RWPE1 (cell line): ENCODE measurements at regions of chr4 and their contacts with region 1.

Region 1: GRCh38 chr4:127604949-127605709 is 27.6 kb upstream of the INTU start:
- DNase-seq: peak; percentile 28
- H3K27ac ChIP-seq: no peak overlapping the region
- CTCF ChIP-seq: peak; percentile 60

Region 2: GRCh38 chr4:127370604-127371003 is 234.5 kb before region 1 on chr4:
- CTCF ChIA-PET with region 1: no interaction called
- POLR2A ChIA-PET with region 1: no interaction called
- DNase-seq: no peak
- H3K27ac ChIP-seq: no peak overlapping the region
- CTCF ChIP-seq: no peak

Region 3: DNA sequence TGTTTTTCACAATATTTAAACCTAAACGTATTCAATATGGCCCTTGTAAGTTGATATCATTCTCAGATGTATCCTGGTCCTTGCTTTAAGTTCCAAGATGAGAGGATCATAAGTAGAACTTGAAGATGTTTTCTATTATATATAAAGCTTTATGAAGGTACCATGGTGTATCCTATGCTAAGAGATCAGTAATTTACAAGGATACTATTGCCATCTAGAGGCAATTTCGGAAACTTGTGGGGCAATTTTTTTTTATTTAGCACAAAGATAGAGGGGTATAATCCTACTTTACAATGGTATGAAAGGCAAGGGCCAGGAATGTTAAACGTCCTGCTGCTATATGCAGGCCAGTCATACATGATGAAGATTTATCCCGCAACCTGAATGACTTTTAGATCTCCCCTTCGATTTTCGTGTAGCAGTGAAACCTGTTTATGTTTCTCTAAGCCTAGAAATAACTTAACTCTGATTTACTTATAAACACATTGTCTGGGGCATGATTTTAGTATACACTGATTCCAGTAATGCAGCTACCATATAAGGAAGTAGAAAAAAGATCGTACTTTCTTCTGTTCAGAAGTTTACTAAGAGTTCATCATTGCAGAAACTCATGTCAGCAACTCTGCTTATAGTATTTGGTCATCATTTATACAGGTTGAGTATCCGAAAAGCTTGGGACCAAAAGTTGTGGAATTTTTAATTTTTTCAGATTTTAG is 127.6 kb after region 1 on chr4:
- CTCF ChIA-PET with region 1: interaction called, 46 read pairs
- POLR2A ChIA-PET with region 1: no interaction called
- DNase-seq: peak; percentile 56
- H3K27ac ChIP-seq: no peak overlapping the region
- CTCF ChIP-seq: peak; percentile 68